HepG2 (cell line): ENCODE measurements at regions of chr3 and their contacts with region 1.

Region 1: GRCh38 chr3:13452490-13453335 is 27.4 kb upstream of the HDAC11 start:
- DNase-seq: peak; percentile 63
- ATAC-seq: peak; percentile 71
- H3K4me3 ChIP-seq: peak overlapping the region; percentile 66 to 72 (median 70)
- H3K27ac ChIP-seq: peak overlapping the region; percentile 62
- H3K4me1 ChIP-seq: peaks cover 57% of the 10 kb centered on the region
- H3K27me3 ChIP-seq: no peaks in the 10 kb centered on the region
- CTCF ChIP-seq: peak; percentile 77
- EP300 ChIP-seq: no peak
- POLR2A ChIP-seq: no peak
- RAD21 ChIP-seq: peak; percentile 51

Region 2: DNA sequence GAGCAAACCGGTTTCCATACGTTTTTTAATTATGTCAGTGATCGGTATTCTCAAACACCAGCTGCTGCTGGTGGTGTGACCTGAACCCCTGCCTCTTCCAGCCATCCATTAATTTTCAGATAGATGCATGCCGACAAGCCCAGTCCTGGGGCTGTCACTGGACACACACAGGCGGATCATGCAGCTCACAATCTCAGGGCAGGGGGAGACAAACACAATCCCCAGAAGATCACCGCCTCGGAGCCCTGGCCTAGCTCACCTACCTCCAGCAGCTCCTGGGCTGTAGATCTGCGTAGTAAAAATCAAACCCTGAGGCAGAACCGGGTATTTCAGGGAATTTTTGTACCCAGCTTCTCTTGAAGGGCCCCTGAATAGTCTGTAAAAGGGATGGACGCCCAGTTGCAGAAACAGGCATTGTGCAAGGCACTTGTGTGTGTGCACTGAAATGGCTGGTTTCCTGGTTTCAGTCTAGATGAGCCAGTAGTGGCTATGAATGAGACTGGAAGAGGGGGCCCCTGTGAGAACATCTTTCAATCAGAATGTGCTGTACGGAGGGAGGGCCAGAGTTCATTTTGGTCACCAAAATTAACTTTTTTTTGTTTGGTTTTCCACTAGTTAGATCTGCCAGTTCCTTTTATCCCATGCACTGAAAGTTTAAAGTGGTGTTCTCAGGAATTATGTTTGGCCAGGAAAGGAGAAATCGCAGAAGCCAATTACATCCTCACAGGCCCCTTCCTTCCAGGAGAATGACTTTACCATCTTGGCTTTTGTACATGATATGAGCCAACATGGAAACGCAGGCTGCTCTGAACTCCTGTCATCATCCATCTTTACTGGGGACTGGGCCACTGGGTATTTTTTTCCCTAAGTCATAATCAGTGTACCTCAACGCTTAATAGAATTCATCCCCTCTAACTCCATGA is 556.4 kb before region 1 on chr3:
- CTCF ChIA-PET with region 1: no interaction called
- POLR2A ChIA-PET with region 1: no interaction called
- in situ Hi-C with region 1: no loop called
- intact Hi-C with region 1: no loop called
- DNase-seq: no peak
- ATAC-seq: peak; percentile 35
- H3K4me3 ChIP-seq: no peak overlapping the region
- H3K27ac ChIP-seq: no peak overlapping the region
- H3K4me1 ChIP-seq: peaks cover 40% of the 10 kb centered on the region
- H3K27me3 ChIP-seq: no peaks in the 10 kb centered on the region
- CTCF ChIP-seq: no peak; the same call in 1 of the 2 replicates
- EP300 ChIP-seq: no peak
- POLR2A ChIP-seq: no peak
- RAD21 ChIP-seq: no peak

Region 3: GRCh38 chr3:13308380-13308801 is 144.3 kb before region 1 on chr3:
- CTCF ChIA-PET with region 1: no interaction called
- POLR2A ChIA-PET with region 1: no interaction called
- in situ Hi-C with region 1: loop called (anchors 5 kb)
- intact Hi-C with region 1: loop called (anchors 10 kb)
- DNase-seq: peak; percentile 47
- ATAC-seq: peak; percentile 75
- H3K4me3 ChIP-seq: no peak overlapping the region
- H3K27ac ChIP-seq: no peak overlapping the region
- H3K4me1 ChIP-seq: peaks cover 17% of the 10 kb centered on the region
- H3K27me3 ChIP-seq: peaks cover 2 to 6% of the 10 kb centered on the region in 2 experiments; a peak in 2 of 5 replicates
- CTCF ChIP-seq: peak; percentile 68
- EP300 ChIP-seq: no peak
- POLR2A ChIP-seq: no peak
- RAD21 ChIP-seq: peak; percentile 47; the same call in 1 of the 2 replicates

Region 4: DNA sequence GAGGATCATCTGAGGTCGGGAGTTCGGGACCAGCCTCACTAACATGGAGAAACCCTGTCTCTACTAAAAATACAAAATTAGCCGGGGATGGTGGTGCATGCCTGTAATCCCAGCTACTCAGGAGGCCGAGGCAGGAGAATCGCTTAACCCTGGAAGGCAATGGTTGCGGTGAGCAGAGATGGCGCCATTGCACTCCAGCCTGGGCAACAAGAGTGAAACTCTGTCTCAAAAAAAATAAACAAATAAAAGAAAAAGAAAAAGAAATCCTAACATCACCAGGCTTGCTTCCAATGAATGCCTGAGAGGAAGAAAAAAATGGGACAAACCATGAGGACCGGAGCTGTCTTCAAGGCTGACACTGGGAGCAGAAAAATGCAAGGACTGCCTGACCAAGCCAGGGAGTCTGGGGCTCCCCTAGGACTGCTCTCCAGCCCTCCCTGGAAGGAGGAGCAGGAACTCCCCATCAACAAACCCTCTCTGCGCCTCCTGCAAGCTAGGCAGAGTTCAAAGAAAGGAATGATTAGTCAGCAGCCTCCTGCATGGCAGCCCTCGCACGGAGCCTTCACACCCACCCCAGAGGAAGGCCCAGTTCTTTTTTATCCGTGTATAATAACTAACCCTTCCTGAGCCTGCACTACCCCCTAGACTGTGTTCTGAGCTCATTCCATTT is 88.0 kb before region 1 on chr3:
- CTCF ChIA-PET with region 1: no interaction called
- POLR2A ChIA-PET with region 1: interaction called, 3 read pairs
- in situ Hi-C with region 1: no loop called
- intact Hi-C with region 1: loop called (anchors 2 kb)
- DNase-seq: no peak
- ATAC-seq: peak; percentile 8
- H3K4me3 ChIP-seq: no peak overlapping the region
- H3K27ac ChIP-seq: peak overlapping the region; percentile 82
- H3K4me1 ChIP-seq: peaks cover 32% of the 10 kb centered on the region
- H3K27me3 ChIP-seq: no peaks in the 10 kb centered on the region
- CTCF ChIP-seq: no peak
- EP300 ChIP-seq: no peak
- POLR2A ChIP-seq: no peak
- RAD21 ChIP-seq: no peak

Region 5: GRCh38 chr3:13419505-13420044 is 33.1 kb before region 1 on chr3:
- CTCF ChIA-PET with region 1: interaction called, 5 read pairs
- POLR2A ChIA-PET with region 1: interaction called, 17 read pairs
- in situ Hi-C with region 1: no loop called
- intact Hi-C with region 1: loop called (anchors 5 kb)
- DNase-seq: no peak
- ATAC-seq: peak; percentile 64
- H3K4me3 ChIP-seq: peak overlapping the region; percentile 80 to 88 (median 85)
- H3K27ac ChIP-seq: peak overlapping the region; percentile 69
- H3K4me1 ChIP-seq: peaks cover 89% of the 10 kb centered on the region
- H3K27me3 ChIP-seq: no peaks in the 10 kb centered on the region; a peak in 1 of 5 replicates
- CTCF ChIP-seq: no peak; the same call in 1 of the 2 replicates
- EP300 ChIP-seq: no peak
- POLR2A ChIP-seq: no peak; a peak in 1 of 4 replicates
- RAD21 ChIP-seq: 0 out of 2 replicates have a peak, but pooled peaks have one; percentile 1

Region 6: DNA sequence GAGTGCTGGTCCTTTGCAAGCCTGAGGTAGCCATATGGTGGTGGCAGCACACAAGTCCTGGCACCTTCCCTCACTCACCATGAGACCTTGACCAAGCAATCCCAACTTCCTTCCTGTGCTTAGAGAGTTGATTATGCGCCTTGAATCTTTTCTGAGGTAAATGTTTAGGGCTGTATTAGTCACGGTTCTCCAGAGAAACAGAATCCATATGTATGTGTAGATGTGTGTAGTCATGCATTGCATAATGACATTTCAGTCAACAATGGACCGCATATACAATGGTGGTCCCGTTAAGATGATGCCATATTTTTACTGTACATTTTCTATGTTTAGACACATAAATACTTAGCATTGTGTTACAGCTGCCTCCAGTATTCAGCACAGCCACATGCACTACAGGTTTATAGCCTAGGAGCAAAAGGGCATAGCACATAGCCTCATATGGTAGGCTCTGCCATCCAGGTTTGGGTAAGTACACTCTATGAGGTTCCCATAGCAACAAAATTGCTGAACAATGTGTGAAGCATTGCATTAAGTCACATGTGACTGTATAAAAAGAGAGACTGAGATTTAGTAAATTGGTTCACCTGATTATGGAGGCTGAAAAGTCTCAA is 12.4 kb before region 1 on chr3:
- CTCF ChIA-PET with region 1: no interaction called
- POLR2A ChIA-PET with region 1: no interaction called
- in situ Hi-C with region 1: no loop called
- intact Hi-C with region 1: no loop called
- DNase-seq: no peak
- ATAC-seq: no peak; the same call in 2 of the 3 replicates
- H3K4me3 ChIP-seq: no peak overlapping the region
- H3K27ac ChIP-seq: no peak overlapping the region
- H3K4me1 ChIP-seq: no peaks in the 10 kb centered on the region
- H3K27me3 ChIP-seq: no peaks in the 10 kb centered on the region
- CTCF ChIP-seq: no peak
- EP300 ChIP-seq: no peak
- POLR2A ChIP-seq: no peak
- RAD21 ChIP-seq: no peak